ENCODE measurements at regions of chr20 and their contacts with region 1.

Region 1: GRCh38 chr20:3218307-3218988 is 9.2 kb downstream of the ITPA start:
- DNase-seq: peak; percentile 83
- H3K4me3 Mint-ChIP-seq: no peak overlapping the region
- H3K27ac Mint-ChIP-seq: no peak overlapping the region
- H3K4me1 Mint-ChIP-seq: peaks cover 20% of the 10 kb centered on the region
- H3K27me3 Mint-ChIP-seq: no peaks in the 10 kb centered on the region

Region 2: GRCh38 chr20:3248167-3248992 is 29.9 kb after region 1 on chr20:
- CTCF ChIA-PET with region 1: interaction called, 10 read pairs
- DNase-seq: peak; percentile 39
- H3K4me3 Mint-ChIP-seq: no peak overlapping the region
- H3K27ac Mint-ChIP-seq: no peak overlapping the region
- H3K4me1 Mint-ChIP-seq: peaks cover 7% of the 10 kb centered on the region
- H3K27me3 Mint-ChIP-seq: peaks cover 68% of the 10 kb centered on the region

Region 3: GRCh38 chr20:3276680-3277015 is 58.2 kb after region 1 on chr20:
- CTCF ChIA-PET with region 1: interaction called, 18 read pairs
- DNase-seq: no peak
- H3K4me3 Mint-ChIP-seq: no peak overlapping the region
- H3K27ac Mint-ChIP-seq: no peak overlapping the region
- H3K4me1 Mint-ChIP-seq: no peaks in the 10 kb centered on the region
- H3K27me3 Mint-ChIP-seq: no peaks in the 10 kb centered on the region

Region 4: GRCh38 chr20:3312940-3313682 is 94.7 kb after region 1 on chr20:
- CTCF ChIA-PET with region 1: interaction called, 51 read pairs
- DNase-seq: no peak
- H3K4me3 Mint-ChIP-seq: no peak overlapping the region
- H3K27ac Mint-ChIP-seq: no peak overlapping the region
- H3K4me1 Mint-ChIP-seq: no peaks in the 10 kb centered on the region
- H3K27me3 Mint-ChIP-seq: peaks cover 4% of the 10 kb centered on the region